HCT116 (cell line): ENCODE measurements at regions of chr20 and their contacts with region 1.

Region 1: GRCh38 chr20:63537525-63538203 is 488 bp upstream of the PTK6 start:
- DNase-seq: peak; percentile 93
- ATAC-seq: peak; percentile 84
- H3K4me3 ChIP-seq: peak overlapping the region; percentile 67
- H3K27ac ChIP-seq: peak overlapping the region; percentile 97
- H3K4me1 ChIP-seq: peaks cover 41 to 88% of the 10 kb centered on the region in 2 experiments
- H3K27me3 ChIP-seq: no peaks in the 10 kb centered on the region
- CTCF ChIP-seq: peak in 2 of 3 experiments; percentile 80 to 86; a peak in 4 of 6 replicates
- POLR2A ChIP-seq: no peak
- RAD21 ChIP-seq: no peak

Region 2: DNA sequence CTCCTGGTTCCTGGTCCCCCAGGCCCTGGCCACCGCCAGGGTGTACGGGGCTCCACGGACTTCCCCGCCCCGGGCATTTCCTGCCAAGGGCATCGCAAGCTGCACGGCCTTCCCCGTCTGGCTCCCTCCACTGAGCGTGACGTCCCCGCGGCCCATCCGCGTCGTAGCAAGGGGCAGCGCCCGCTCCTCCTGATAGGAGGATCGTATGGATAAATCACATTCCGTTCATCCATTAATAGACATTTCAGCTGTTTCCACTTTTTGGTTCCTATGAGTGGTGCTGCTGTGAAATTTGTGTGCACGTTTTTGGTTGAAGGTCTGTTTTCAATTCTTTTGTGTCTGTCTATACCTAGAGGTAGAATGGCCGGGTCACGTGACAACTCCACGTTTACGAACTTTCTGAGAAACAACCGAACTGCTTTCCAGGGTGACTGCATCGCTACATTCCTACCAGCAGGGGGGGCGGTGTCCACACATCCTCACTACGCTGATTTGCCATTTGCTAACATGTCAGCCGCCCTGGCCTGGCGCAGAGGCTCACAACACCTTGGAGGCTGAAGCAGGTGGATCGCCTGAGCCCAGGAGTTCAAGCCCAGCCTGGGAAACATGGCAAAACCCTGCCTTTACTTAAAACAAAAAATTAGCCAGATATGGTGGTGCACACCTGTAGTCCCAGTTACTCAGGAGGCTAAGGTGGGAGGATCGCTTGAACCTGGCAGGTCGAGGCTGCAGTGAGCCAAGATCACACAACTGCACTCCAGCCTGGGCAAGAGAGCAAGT is 102.9 kb before region 1 on chr20:
- CTCF ChIA-PET with region 1: no interaction called
- POLR2A ChIA-PET with region 1: no interaction called
- RAD21 ChIA-PET with region 1: no interaction called
- intact Hi-C with region 1: loop called (anchors 10 kb)
- DNase-seq: peak; percentile 63
- ATAC-seq: peak; percentile 77
- H3K4me3 ChIP-seq: no peak overlapping the region
- H3K27ac ChIP-seq: peak overlapping the region; percentile 6; the same call in 1 of the 2 replicates
- H3K4me1 ChIP-seq: peaks cover 3 to 17% of the 10 kb centered on the region in 2 experiments; a peak in 2 of 4 replicates
- H3K27me3 ChIP-seq: no peaks in the 10 kb centered on the region
- CTCF ChIP-seq: peak; percentile 49 to 98 (median 87); a peak in 5 of 6 replicates
- POLR2A ChIP-seq: no peak
- RAD21 ChIP-seq: peak; percentile 71

Region 3: GRCh38 chr20:63475206-63475605 is 62.5 kb before region 1 on chr20:
- CTCF ChIA-PET with region 1: no interaction called
- POLR2A ChIA-PET with region 1: no interaction called
- RAD21 ChIA-PET with region 1: no interaction called
- intact Hi-C with region 1: no loop called
- DNase-seq: no peak
- ATAC-seq: no peak
- H3K4me3 ChIP-seq: no peak overlapping the region
- H3K27ac ChIP-seq: no peak overlapping the region
- H3K4me1 ChIP-seq: peaks cover 6 to 22% of the 10 kb centered on the region in 2 experiments
- H3K27me3 ChIP-seq: no peaks in the 10 kb centered on the region
- CTCF ChIP-seq: no peak
- POLR2A ChIP-seq: no peak
- RAD21 ChIP-seq: no peak

Region 4: DNA sequence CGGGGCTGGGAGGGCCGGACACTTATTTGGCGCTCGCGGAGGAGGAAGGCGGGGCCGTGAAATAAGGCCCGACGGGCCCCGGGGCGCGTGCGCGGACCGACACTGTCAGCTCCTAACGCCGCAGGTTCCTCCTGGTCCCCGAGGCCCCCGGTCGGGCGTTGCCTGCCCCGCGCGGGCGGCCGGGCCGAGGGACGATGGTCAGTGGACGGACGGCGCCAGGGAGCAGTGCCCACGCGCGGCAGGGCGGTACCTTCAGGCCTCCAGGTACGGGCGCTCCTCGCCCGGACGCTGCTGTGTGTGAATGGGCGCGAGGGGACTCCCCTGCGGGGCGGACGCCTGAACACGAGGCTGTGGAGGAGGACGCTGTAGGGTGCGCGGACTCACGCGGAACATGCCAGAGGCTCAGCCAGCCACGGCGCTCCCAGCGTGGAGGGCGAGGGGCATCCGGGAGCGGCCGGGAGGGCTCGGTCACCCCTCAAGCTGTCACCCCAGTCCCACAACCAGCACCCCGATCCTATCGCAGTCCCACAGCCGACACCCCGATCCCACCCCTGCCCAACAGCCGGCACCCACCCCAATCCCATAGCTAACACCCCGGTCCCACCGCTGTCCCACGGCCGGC is 89.6 kb after region 1 on chr20:
- CTCF ChIA-PET with region 1: interaction called, 3 read pairs
- POLR2A ChIA-PET with region 1: interaction called, 4 read pairs
- RAD21 ChIA-PET with region 1: interaction called in 1 of 2 experiments, 4 read pairs
- intact Hi-C with region 1: loop called (anchors 5 kb)
- DNase-seq: peak; percentile 87
- ATAC-seq: peak; percentile 74
- H3K4me3 ChIP-seq: peak overlapping the region; percentile 88 to 96
- H3K27ac ChIP-seq: peak overlapping the region; percentile 98
- H3K4me1 ChIP-seq: peaks cover 8 to 22% of the 10 kb centered on the region in 2 experiments
- H3K27me3 ChIP-seq: no peaks in the 10 kb centered on the region
- CTCF ChIP-seq: no peak
- POLR2A ChIP-seq: peak; percentile 45
- RAD21 ChIP-seq: no peak

Region 5: DNA sequence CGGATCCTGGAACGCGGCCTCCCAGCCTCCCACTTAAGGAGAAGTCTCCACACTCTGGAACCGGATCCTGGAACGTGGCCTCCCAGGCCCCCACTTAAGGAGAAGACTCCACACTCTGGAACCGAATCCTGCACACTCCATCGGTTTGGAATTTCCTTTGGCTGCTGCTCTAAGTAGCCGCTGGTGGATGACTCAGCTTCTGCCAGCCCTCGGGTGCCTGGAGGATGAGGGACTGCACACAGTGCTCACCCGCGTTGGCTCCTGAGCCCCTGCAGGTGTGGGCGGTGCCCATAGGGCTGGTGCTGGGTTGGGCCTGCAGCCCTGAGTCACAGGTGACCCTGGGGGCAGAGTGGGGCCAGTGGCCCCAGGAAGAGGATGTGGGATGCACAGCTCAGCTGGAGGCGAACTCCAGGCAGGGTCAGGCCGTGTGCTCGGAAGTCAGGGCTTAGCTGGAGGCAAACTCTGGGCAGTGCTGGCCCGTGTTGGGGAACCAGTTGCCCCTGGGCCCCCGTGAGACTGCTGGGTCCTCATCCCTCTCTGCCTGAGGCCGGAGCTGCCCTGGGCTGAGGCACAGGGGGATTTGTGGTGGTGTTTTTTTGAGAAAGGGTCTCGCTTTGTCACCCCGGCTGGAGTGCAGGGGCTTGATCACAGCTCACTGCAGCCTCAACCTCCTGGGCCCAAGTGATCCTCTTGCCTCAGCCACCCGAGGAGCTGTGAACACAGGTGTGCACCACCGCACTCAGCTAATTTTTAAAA is 144.9 kb after region 1 on chr20:
- CTCF ChIA-PET with region 1: interaction called, 3 read pairs
- POLR2A ChIA-PET with region 1: no interaction called
- RAD21 ChIA-PET with region 1: no interaction called
- intact Hi-C with region 1: loop called (anchors 5 kb)
- DNase-seq: peak; percentile 97
- ATAC-seq: peak; percentile 91
- H3K4me3 ChIP-seq: peak overlapping the region; percentile 24 to 51
- H3K27ac ChIP-seq: peak overlapping the region; percentile 100
- H3K4me1 ChIP-seq: peaks cover 59 to 71% of the 10 kb centered on the region in 2 experiments
- H3K27me3 ChIP-seq: no peaks in the 10 kb centered on the region
- CTCF ChIP-seq: no peak
- POLR2A ChIP-seq: peak; percentile 49
- RAD21 ChIP-seq: no peak

Region 6: GRCh38 chr20:63864847-63865640 is 327.4 kb after region 1 on chr20 and contains the start of gene TPD52L2:
- CTCF ChIA-PET with region 1: interaction called, 20 read pairs
- POLR2A ChIA-PET with region 1: interaction called, 6 read pairs
- RAD21 ChIA-PET with region 1: interaction called, 6 to 8 read pairs
- intact Hi-C with region 1: loop called (anchors 2 kb)
- DNase-seq: peak; percentile 100
- ATAC-seq: peak; percentile 82
- H3K4me3 ChIP-seq: peak within 1 kb of the TSS; percentile 98 to 100
- H3K27ac ChIP-seq: peak within 1 kb of the TSS; percentile 95
- H3K4me1 ChIP-seq: peaks cover 14 to 19% of the 10 kb centered on the region in 2 experiments
- H3K27me3 ChIP-seq: no peaks in the 10 kb centered on the region
- CTCF ChIP-seq: no peak
- POLR2A ChIP-seq: peak; percentile 77
- RAD21 ChIP-seq: no peak
- total RNA-seq, gene TPD52L2: 149 TPM

Region 7: DNA sequence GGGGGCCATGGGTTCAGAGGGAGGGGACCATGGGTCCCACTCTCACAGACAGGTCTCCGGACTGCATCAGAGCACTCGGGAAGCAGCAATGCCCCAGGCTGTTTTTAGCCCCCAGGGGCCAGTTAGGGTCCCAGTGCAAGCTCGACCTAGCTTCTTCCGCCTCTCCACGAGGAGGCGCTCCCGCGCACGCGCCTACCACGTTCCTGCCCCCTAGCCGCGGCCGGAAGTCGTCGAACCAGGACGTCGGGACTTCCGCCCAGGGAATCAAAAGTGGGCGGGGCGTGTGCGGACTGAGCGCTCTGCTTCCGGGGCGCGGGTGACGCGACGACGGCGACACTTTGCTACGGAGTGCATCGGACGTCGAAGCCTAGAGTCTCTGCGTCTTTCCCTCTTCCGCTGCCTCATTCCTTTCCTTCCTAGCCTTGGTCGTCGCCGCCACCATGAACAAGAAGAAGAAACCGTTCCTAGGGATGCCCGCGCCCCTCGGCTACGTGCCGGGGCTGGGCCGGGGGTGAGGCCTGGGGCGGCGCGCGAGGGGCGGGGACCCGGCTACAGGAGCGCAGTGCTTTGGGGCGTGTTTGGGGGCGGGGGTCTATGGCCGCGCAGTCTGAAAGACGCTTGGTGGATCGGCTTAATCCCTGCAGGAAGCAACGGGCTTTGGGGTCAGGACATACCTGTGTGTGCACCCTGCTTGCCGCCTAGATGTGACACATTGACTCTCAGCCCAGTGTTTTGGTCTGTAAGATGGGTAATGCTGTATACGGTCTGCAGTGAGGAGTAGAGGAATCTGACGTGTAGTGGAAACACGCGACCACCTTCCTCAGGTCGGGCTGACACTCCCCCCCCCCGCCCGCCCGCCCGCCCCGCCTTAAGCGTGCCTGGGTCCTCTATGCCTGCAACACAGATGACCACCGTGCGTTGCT is 443.4 kb after region 1 on chr20 and contains the start of gene PRPF6:
- CTCF ChIA-PET with region 1: interaction called, 17 read pairs
- POLR2A ChIA-PET with region 1: interaction called, 6 read pairs
- RAD21 ChIA-PET with region 1: no interaction called
- intact Hi-C with region 1: no loop called
- DNase-seq: peak; percentile 91
- ATAC-seq: peak; percentile 78
- H3K4me3 ChIP-seq: peak within 1 kb of the TSS; percentile 94 to 98
- H3K27ac ChIP-seq: peak within 1 kb of the TSS; percentile 69
- H3K4me1 ChIP-seq: peaks cover 22 to 45% of the 10 kb centered on the region in 2 experiments
- H3K27me3 ChIP-seq: no peaks in the 10 kb centered on the region
- CTCF ChIP-seq: peak in 2 of 3 experiments; percentile 82 to 91; a peak in 4 of 6 replicates
- POLR2A ChIP-seq: no peak
- RAD21 ChIP-seq: no peak
- total RNA-seq, gene PRPF6: 74.9 TPM